ENCODE measurements at regions of chr7 and their contacts with region 1.

Region 1: GRCh38 chr7:115319536-115319935 is 397.6 kb downstream of the MDFIC start:
- DNase-seq: no peak
- H3K4me3 Mint-ChIP-seq: no peak overlapping the region
- H3K27ac Mint-ChIP-seq: no peak overlapping the region
- H3K4me1 Mint-ChIP-seq: no peaks in the 10 kb centered on the region
- H3K27me3 Mint-ChIP-seq: peaks cover 2% of the 10 kb centered on the region

Region 2: GRCh38 chr7:115260381-115260780 is 59.2 kb before region 1 on chr7:
- CTCF ChIA-PET with region 1: no interaction called
- intact Hi-C with region 1: loop called (anchors 2 kb)
- DNase-seq: no peak
- H3K4me3 Mint-ChIP-seq: no peak overlapping the region
- H3K27ac Mint-ChIP-seq: no peak overlapping the region
- H3K4me1 Mint-ChIP-seq: no peaks in the 10 kb centered on the region
- H3K27me3 Mint-ChIP-seq: no peaks in the 10 kb centered on the region

Region 3: GRCh38 chr7:115435178-115435577 is 115.6 kb after region 1 on chr7:
- CTCF ChIA-PET with region 1: no interaction called
- intact Hi-C with region 1: no loop called
- DNase-seq: no peak
- H3K4me3 Mint-ChIP-seq: no peak overlapping the region
- H3K27ac Mint-ChIP-seq: no peak overlapping the region
- H3K4me1 Mint-ChIP-seq: no peaks in the 10 kb centered on the region
- H3K27me3 Mint-ChIP-seq: peaks cover 5% of the 10 kb centered on the region

Region 4: GRCh38 chr7:115558161-115558560 is 238.6 kb after region 1 on chr7:
- CTCF ChIA-PET with region 1: no interaction called
- intact Hi-C with region 1: no loop called
- DNase-seq: no peak
- H3K4me3 Mint-ChIP-seq: no peak overlapping the region
- H3K27ac Mint-ChIP-seq: no peak overlapping the region
- H3K4me1 Mint-ChIP-seq: no peaks in the 10 kb centered on the region
- H3K27me3 Mint-ChIP-seq: peaks cover 2% of the 10 kb centered on the region

Measured in activated naive CD4-positive, alpha-beta T cell treated with anti-CD3 and anti-CD28 coated beads for 36 hours (primary cell).